ENCODE measurements at regions of chr15 and their contacts with region 1.

Region 1: GRCh38 chr15:69729161-69729748 is 276.6 kb downstream of the RPLP1 start:
- DNase-seq: peak; percentile 26 to 75 (median 48)
- H3K4me3 ChIP-seq: no peak overlapping the region
- H3K27ac ChIP-seq: no peak overlapping the region
- H3K4me1 ChIP-seq: no peaks in the 10 kb centered on the region
- H3K27me3 ChIP-seq: no peaks in the 10 kb centered on the region
- CTCF ChIP-seq: peak; percentile 59 to 81 (median 72)
- POLR2A ChIP-seq: no peak

Region 2: GRCh38 chr15:69976366-69976994 is 247.2 kb after region 1 on chr15:
- intact Hi-C with region 1: no loop called
- DNase-seq: peak in 5 of 7 donors; percentile 29 to 47 (median 33)
- H3K4me3 ChIP-seq: no peak overlapping the region
- H3K27ac ChIP-seq: no peak overlapping the region
- H3K4me1 ChIP-seq: no peaks in the 10 kb centered on the region
- H3K27me3 ChIP-seq: no peaks in the 10 kb centered on the region
- CTCF ChIP-seq: no peak
- POLR2A ChIP-seq: no peak

Region 3: GRCh38 chr15:70097337-70098169 is 368.3 kb after region 1 on chr15 and contains the start of gene TLE3:
- intact Hi-C with region 1: loop called in 1 of 2 experiments (anchors 10 kb)
- DNase-seq: peak; percentile 99 to 100 (median 99)
- H3K4me3 ChIP-seq: peak within 1 kb of the TSS; percentile 32 to 93 (median 68)
- H3K27ac ChIP-seq: peak within 1 kb of the TSS; percentile 76 to 97 (median 94)
- H3K4me1 ChIP-seq: peaks cover 40 to 75% of the 10 kb centered on the region in 2 donors
- H3K27me3 ChIP-seq: no peaks in the 10 kb centered on the region
- CTCF ChIP-seq: peak in 5 of 6 experiments; percentile 25 to 43 (median 39)
- POLR2A ChIP-seq: peak; percentile 76 to 93
- total RNA-seq, gene TLE3: 1.6 to 73.3 (median 39.1) TPM

Region 4: DNA sequence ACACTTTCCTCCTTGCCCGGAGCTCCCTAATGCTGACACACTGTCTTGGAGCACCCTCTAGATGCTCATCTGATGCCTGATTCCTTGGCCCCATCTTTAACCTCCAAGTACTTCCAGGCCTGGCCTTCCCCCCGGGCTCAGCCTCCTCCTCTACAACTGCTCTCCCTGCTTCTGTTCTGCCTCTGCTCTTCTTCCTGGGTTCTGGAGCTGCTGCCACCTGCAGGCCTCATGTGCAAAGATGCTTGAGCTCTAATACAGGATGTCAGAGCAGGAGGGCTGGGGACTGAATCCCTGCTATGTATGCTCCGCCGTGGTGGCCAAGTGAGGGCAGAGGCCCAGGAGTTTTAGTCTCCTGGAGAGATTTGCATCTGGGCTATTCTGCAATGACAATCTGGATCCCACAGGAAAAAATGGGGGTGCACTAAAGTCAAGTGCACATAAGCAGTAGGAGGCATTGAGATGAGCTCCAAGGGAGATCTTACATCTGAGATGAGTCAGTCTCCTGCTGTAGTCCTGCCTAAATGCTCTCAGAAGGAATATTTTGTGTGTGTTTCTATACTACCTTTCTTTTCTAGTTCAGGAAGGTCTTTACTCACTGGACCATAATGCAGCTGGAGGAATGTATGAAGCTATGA is 737.8 kb after region 1 on chr15:
- intact Hi-C with region 1: loop called in 1 of 2 experiments (anchors 5 kb)
- DNase-seq: peak; percentile 36 to 79 (median 49)
- H3K4me3 ChIP-seq: no peak overlapping the region
- H3K27ac ChIP-seq: no peak overlapping the region
- H3K4me1 ChIP-seq: no peaks in the 10 kb centered on the region
- H3K27me3 ChIP-seq: no peaks in the 10 kb centered on the region
- CTCF ChIP-seq: peak; percentile 11 to 59 (median 52)
- POLR2A ChIP-seq: no peak